Activated CD4-positive, alpha-beta memory T cell treated with anti-CD3 and anti-CD28 coated beads for 36 hours (primary cell): ENCODE measurements at regions of chr20 and their contacts with region 1.

Region 1: DNA sequence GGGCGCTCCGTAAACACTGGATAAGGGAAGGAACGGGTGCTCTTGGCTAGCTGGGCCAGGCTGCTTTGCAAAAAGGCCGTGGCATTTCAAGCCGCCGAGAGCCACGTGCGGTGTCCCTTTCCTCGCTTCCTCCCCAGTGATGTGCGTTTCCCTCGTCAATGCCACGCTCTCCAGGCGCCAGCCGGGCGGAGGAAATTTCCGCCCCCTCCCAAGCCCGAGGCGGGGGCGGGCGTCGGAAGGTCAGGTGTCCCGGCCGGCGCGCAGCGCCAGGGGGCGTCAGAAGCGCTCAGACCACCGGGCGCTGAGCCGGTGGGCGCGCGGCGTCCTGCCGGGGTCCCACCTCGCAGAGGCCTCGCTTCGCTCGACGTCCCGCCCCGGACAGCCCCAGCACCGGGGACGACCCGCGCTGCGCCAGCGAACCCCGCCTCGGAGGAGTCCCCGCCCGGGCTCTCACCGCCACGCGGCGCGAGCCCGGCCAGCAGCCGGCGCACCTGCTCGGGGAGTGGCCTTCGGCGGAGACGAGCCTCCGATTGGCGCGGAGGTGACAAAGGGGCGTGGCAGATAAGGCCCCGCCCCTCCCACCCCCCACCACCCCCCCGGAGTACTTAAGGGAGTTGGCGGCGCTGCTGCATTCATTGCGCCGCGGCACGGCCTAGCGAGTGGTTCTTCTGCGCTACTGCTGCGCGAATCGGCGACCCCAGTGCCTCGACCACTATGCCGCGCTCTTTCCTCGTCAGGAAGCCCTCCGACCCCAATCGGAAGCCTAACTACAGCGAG is at the start of gene SNAI1:
- DNase-seq: peak; percentile 84
- H3K4me3 Mint-ChIP-seq: peak within 1 kb of the TSS; percentile 23
- H3K27ac Mint-ChIP-seq: no peak within 1 kb of the TSS
- H3K4me1 Mint-ChIP-seq: peaks cover 20% of the 10 kb centered on the region
- H3K27me3 Mint-ChIP-seq: peaks cover 4% of the 10 kb centered on the region
- total RNA-seq, gene SNAI1: 0.27 TPM in 1 of 2 experiments, not detected in the other

Region 2: GRCh38 chr20:49865559-49865958 is 117.0 kb before region 1 on chr20:
- CTCF ChIA-PET with region 1: no interaction called
- POLR2A ChIA-PET with region 1: no interaction called
- intact Hi-C with region 1: no loop called
- DNase-seq: no peak
- H3K4me3 Mint-ChIP-seq: no peak overlapping the region
- H3K27ac Mint-ChIP-seq: no peak overlapping the region
- H3K4me1 Mint-ChIP-seq: peaks cover 10% of the 10 kb centered on the region
- H3K27me3 Mint-ChIP-seq: no peaks in the 10 kb centered on the region

Region 3: GRCh38 chr20:49948809-49949548 is 33.6 kb before region 1 on chr20:
- CTCF ChIA-PET with region 1: interaction called, 17 read pairs
- POLR2A ChIA-PET with region 1: no interaction called
- intact Hi-C with region 1: no loop called
- DNase-seq: no peak
- H3K4me3 Mint-ChIP-seq: no peak overlapping the region
- H3K27ac Mint-ChIP-seq: no peak overlapping the region
- H3K4me1 Mint-ChIP-seq: peaks cover 20% of the 10 kb centered on the region
- H3K27me3 Mint-ChIP-seq: no peaks in the 10 kb centered on the region

Region 4: DNA sequence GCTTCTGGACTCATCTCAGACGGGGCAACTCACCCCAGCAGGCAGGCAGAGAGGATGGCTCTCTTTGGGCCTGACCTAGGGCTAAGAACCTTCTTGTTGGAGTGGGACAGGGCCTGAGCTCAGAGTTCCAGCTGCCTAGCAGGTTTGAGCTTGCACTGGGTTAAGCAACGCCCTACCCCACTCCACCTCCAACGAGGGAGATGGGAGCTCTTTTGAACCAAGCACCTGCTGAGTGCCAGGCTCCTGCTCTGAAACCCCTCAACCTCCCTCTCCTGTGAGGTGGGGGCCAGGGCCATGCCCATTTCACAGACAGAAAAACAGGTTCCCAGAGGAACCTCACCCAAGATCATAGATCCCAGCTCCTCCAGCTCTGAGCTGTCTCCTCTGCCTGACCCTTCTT is 54.6 kb after region 1 on chr20:
- CTCF ChIA-PET with region 1: interaction called, 11 read pairs
- POLR2A ChIA-PET with region 1: no interaction called
- intact Hi-C with region 1: no loop called
- DNase-seq: no peak
- H3K4me3 Mint-ChIP-seq: no peak overlapping the region
- H3K27ac Mint-ChIP-seq: no peak overlapping the region
- H3K4me1 Mint-ChIP-seq: no peaks in the 10 kb centered on the region
- H3K27me3 Mint-ChIP-seq: no peaks in the 10 kb centered on the region

Region 5: GRCh38 chr20:50085452-50086365 is 103.2 kb after region 1 on chr20:
- CTCF ChIA-PET with region 1: interaction called, 20 read pairs
- POLR2A ChIA-PET with region 1: no interaction called
- intact Hi-C with region 1: loop called (anchors 1 kb)
- DNase-seq: peak; percentile 36
- H3K4me3 Mint-ChIP-seq: no peak overlapping the region
- H3K27ac Mint-ChIP-seq: peak overlapping the region; percentile 39
- H3K4me1 Mint-ChIP-seq: peaks cover 31% of the 10 kb centered on the region
- H3K27me3 Mint-ChIP-seq: no peaks in the 10 kb centered on the region

Region 6: DNA sequence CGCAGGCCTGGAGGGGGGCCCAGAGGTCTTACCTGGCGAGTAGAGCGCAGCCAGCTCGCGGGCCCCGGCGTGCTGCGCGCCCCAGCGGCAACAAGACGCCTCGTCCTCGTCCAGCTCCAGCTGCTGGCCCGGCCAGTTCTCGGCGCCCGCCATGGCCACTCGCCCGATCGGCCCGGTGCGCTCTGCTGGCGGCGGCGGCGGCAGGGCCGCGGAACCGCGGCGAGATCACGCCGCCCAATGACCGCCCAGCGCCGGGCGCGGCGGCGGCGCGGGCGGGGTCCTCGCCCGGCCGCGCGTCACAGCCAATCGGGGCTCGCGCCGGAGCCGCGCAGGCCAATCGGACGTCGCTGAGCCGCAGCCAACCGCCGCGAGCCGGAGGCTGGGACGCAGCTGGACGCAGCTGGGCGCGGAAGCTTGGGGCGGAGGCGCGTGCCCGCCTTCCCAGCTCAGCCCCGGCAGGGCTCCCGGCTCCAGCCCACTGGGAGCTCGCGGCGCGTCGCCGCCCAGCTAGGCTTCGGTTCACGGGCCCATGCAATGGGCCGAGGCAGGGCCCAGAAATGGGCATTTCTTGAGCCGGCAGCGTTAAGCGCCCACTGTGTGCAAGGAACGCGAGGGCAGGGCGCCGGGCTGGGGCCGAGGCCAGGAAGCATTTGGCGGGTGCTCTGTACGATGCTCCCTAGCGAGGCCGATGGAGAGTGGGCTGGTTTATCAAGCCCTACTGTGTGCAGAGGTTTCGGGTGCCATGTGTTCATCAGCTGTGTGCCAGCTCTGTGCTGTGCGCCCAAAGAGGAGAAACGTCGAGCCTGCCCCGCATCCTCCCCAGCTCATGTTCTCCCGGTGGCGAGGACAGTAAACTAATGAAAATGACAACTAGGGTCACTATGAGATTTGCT is 171.2 kb after region 1 on chr20 and contains the start of gene PEDS1:
- CTCF ChIA-PET with region 1: interaction called, 16 read pairs
- POLR2A ChIA-PET with region 1: no interaction called
- intact Hi-C with region 1: no loop called
- DNase-seq: peak; percentile 90
- H3K4me3 Mint-ChIP-seq: peak within 1 kb of the TSS; percentile 81
- H3K27ac Mint-ChIP-seq: peak within 1 kb of the TSS; percentile 70
- H3K4me1 Mint-ChIP-seq: peaks cover 43% of the 10 kb centered on the region
- H3K27me3 Mint-ChIP-seq: no peaks in the 10 kb centered on the region
- total RNA-seq, gene PEDS1: 15.0 to 16.9 TPM

Region 7: GRCh38 chr20:50179507-50180016 is 197.0 kb after region 1 on chr20:
- CTCF ChIA-PET with region 1: interaction called, 43 read pairs
- POLR2A ChIA-PET with region 1: no interaction called
- intact Hi-C with region 1: no loop called
- DNase-seq: no peak
- H3K4me3 Mint-ChIP-seq: no peak overlapping the region
- H3K27ac Mint-ChIP-seq: no peak overlapping the region
- H3K4me1 Mint-ChIP-seq: no peaks in the 10 kb centered on the region
- H3K27me3 Mint-ChIP-seq: peaks cover 3% of the 10 kb centered on the region